PC-3 (cell line): ENCODE measurements at regions of chr14 and their contacts with region 1.

Region 1: GRCh38 chr14:77301103-77301502 is 19.6 kb downstream of the POMT2 start:
- DNase-seq: peak; percentile 88
- ATAC-seq: peak; percentile 12; the same call in 1 of the 2 replicates
- H3K4me3 ChIP-seq: no peak overlapping the region
- H3K27ac ChIP-seq: no peak overlapping the region
- H3K4me1 ChIP-seq: peaks cover 33% of the 10 kb centered on the region
- H3K27me3 ChIP-seq: no peaks in the 10 kb centered on the region
- CTCF ChIP-seq: peak; percentile 99

Region 2: GRCh38 chr14:77314043-77314442 is 12.9 kb after region 1 on chr14:
- CTCF ChIA-PET with region 1: interaction called, 72 read pairs
- POLR2A ChIA-PET with region 1: no interaction called
- intact Hi-C with region 1: loop called (anchors 1 kb)
- DNase-seq: peak; percentile 92
- ATAC-seq: peak; percentile 87
- H3K4me3 ChIP-seq: no peak overlapping the region
- H3K27ac ChIP-seq: peak overlapping the region; percentile 73
- H3K4me1 ChIP-seq: peaks cover 46% of the 10 kb centered on the region
- H3K27me3 ChIP-seq: no peaks in the 10 kb centered on the region
- CTCF ChIP-seq: peak; percentile 21; the same call in 1 of the 2 replicates

Region 3: DNA sequence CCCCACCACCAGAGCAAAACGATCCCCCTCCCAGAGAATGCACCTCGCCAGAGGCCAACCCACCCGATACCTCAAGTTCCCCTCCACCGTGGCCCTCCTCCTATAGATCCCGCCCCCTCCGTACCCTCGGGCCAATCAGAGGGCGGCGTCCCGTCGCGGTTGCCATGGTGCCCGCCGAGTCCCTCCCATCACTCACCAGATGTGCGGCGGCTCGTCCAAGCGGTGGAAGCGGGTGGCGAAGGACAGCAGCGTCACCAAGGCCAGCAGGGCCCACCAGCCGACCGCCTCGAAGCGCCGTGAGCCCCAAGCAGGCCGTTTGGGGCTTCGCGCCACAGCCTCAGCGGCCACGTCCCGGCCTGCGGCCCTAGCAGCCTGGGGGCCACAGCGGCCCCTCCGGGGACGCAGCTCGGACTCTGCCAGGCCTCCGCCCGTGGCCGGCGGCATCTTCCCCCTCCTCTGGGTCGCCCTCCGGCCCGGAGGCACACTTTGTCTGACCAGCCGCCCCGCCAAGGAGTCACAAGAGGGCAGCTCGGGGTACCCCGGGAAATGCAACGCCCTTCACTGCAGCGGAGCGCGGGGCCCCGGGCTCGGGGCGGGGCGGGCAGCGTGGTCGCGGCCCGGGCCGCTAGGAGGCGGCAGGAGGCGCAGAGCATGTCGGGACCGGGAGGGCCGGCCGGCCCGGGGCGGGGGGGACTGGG is 19.3 kb after region 1 on chr14 and contains the start of gene POMT2:
- CTCF ChIA-PET with region 1: interaction called, 72 read pairs
- POLR2A ChIA-PET with region 1: interaction called, 3 read pairs
- intact Hi-C with region 1: loop called (anchors 1 kb)
- DNase-seq: peak; percentile 98
- ATAC-seq: peak; percentile 66
- H3K4me3 ChIP-seq: peak within 1 kb of the TSS; percentile 86
- H3K27ac ChIP-seq: peak within 1 kb of the TSS; percentile 88
- H3K4me1 ChIP-seq: peaks cover 42% of the 10 kb centered on the region
- H3K27me3 ChIP-seq: no peaks in the 10 kb centered on the region
- CTCF ChIP-seq: peak; percentile 52; the same call in 1 of the 2 replicates
- total RNA-seq, gene POMT2: 57.6 and 67.6 TPM in 2 replicates